HCT116 (cell line): ENCODE measurements at regions of chr20 and their contacts with region 1.

Region 1: GRCh38 chr20:59515014-59515905 is 89.1 kb upstream of the PHACTR3 start:
- DNase-seq: peak; percentile 47
- ATAC-seq: peak; percentile 94
- H3K4me3 ChIP-seq: no peak overlapping the region
- H3K27ac ChIP-seq: no peak overlapping the region
- H3K4me1 ChIP-seq: peaks cover 3 to 4% of the 10 kb centered on the region in 2 experiments; a peak in 1 of 4 replicates
- H3K27me3 ChIP-seq: peaks cover 34% of the 10 kb centered on the region; the same call in 1 of the 2 replicates
- CTCF ChIP-seq: peak; percentile 92 to 95 (median 92)
- POLR2A ChIP-seq: no peak
- RAD21 ChIP-seq: peak; percentile 66

Region 2: DNA sequence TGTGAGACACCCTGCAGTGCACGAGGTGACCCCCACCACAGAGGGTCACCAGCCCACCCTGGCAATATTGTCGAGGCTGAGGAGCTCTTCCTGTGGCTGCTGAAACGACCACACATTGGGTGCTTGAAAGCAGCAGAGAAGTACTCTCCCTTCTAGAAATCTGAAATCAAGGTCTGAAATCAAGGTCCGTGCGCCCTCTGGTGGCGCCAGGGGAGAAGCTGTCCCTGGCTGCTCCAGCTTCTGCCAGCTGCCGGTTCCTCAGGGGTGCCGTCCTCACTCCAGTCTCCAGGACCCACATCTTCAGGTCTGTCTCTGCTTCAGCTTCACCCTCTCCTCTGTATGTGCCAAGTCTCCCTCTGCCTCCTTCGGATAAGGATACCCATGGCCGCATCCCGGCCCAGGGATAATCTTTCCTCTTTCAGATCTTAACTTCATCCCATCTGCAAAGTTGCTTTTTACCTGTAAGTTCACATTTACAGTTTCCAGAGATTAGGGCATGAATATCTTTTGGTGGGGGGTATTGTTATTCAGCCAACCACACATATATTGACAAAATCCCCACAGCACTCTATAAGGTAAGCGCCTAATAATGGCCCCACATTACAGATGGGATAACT is 19.3 kb before region 1 on chr20:
- CTCF ChIA-PET with region 1: interaction called, 10 read pairs
- POLR2A ChIA-PET with region 1: no interaction called
- RAD21 ChIA-PET with region 1: no interaction called
- intact Hi-C with region 1: no loop called
- DNase-seq: peak; percentile 36
- ATAC-seq: peak; percentile 95
- H3K4me3 ChIP-seq: no peak overlapping the region
- H3K27ac ChIP-seq: no peak overlapping the region
- H3K4me1 ChIP-seq: no peaks in the 10 kb centered on the region
- H3K27me3 ChIP-seq: peaks cover 21% of the 10 kb centered on the region; the same call in 1 of the 2 replicates
- CTCF ChIP-seq: peak; percentile 33 to 94 (median 92); a peak in 5 of 6 replicates
- POLR2A ChIP-seq: no peak
- RAD21 ChIP-seq: peak; percentile 62

Region 3: DNA sequence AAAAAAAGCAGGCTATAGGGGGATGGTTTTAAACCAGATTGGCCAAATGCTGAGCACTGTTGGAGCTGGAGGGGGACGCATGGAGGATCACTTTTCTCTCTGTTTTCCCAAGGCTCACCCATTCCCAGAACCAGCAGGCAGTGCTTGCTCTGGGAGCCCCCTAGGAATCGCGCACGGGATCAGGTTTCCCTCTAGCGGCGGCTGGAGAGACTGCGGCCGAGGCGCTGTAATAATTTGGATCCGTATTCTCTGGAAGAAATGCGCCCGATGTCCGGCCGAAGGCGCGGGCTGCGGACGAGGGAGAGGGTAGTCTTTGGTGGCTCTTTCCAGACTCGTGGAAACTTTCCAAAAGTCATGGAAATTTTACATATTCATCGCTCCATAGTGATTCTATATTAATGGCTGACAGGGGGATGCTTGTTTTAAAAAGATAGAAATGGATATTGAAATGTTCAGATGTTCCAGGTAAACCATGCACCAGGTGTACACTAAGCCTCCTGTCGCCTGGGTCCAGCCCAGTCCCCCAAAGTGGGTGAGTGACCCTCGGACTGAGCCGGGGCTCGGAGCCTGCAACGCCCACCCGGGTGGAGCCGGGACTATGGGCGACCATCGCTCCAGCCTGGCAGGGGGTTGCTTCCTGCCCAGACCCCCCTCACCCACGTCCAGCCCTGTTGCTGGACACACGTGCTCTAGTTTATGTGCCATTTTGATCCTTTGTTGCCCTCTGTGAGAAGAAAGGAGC is 10.4 kb after region 1 on chr20:
- CTCF ChIA-PET with region 1: interaction called, 34 read pairs
- POLR2A ChIA-PET with region 1: no interaction called
- RAD21 ChIA-PET with region 1: no interaction called
- intact Hi-C with region 1: loop called (anchors 1 kb)
- DNase-seq: peak; percentile 29
- ATAC-seq: peak; percentile 97
- H3K4me3 ChIP-seq: no peak overlapping the region
- H3K27ac ChIP-seq: no peak overlapping the region
- H3K4me1 ChIP-seq: no peaks in the 10 kb centered on the region
- H3K27me3 ChIP-seq: peaks cover 39% of the 10 kb centered on the region
- CTCF ChIP-seq: peak; percentile 86 to 91 (median 89)
- POLR2A ChIP-seq: no peak
- RAD21 ChIP-seq: peak; percentile 62